Testis (tissue), 5 donors: ENCODE measurements at regions of chr9 and their contacts with region 1.

Region 1: DNA sequence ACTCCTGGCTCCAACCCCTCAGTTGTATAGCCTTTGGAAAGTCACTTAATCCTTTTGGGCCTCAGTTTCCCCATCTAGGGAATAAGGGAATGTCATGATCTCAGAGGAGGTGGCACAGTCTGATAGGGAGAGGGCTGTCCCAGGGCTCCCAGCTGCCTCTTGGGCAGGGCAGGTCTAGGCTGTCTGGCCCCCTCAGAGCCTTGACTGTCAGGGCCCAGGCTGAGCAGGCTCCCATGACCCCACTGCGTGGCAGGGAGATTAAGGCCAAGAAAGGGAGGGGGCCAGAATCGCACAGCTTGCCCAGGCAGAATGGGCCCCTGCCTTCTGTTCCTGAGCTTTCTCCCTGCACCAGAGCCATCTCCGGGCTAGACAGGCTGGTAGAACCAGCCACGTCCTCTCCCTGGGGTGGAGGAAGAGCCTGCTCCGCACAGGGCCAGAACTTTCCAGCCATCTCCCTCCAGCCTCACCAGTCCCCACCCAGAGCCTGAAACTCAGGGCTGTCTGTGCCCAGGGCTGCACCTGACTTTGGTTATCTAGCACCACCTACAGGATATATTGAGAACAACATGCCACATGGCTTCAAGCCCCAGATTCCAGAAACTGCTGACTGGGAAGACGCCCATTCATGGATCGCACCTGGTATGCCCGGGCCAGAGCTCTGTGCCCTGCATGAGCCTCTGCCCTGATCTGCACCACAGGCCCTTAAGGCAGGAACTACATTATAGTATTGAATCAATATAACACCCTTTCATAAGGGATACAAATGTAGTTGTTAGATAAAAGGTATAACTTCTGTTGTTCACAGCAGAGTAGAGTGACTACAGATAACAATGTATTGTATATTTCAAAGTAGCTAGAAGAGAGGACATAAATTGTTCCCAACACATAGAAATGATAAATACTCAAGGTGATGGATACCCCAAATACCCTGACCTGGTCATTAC is 32.0 kb downstream of the NAIF1 start:
- DNase-seq: peak; percentile 83
- H3K4me3 ChIP-seq: no peak overlapping the region
- H3K27ac ChIP-seq: no peak overlapping the region
- H3K4me1 ChIP-seq: no peaks in the 10 kb centered on the region
- H3K27me3 ChIP-seq: no peaks in the 10 kb centered on the region
- CTCF ChIP-seq: peak; percentile 91 to 96 (median 93)
- POLR2A ChIP-seq: no peak

Region 2: GRCh38 chr9:127949827-127950512 is 85.1 kb before region 1 on chr9:
- intact Hi-C with region 1: loop called (anchors 5 kb)
- DNase-seq: peak; percentile 84
- H3K4me3 ChIP-seq: no peak overlapping the region
- H3K27ac ChIP-seq: peak overlapping the region; percentile 56 to 77
- H3K4me1 ChIP-seq: peaks cover 68% of the 10 kb centered on the region
- H3K27me3 ChIP-seq: no peaks in the 10 kb centered on the region
- CTCF ChIP-seq: no peak
- POLR2A ChIP-seq: no peak

Region 3: GRCh38 chr9:128103589-128103962 is 68.5 kb after region 1 on chr9:
- intact Hi-C with region 1: no loop called
- DNase-seq: no peak
- H3K4me3 ChIP-seq: no peak overlapping the region
- H3K27ac ChIP-seq: peak overlapping the region; percentile 54 to 63
- H3K4me1 ChIP-seq: peaks cover 76% of the 10 kb centered on the region
- H3K27me3 ChIP-seq: no peaks in the 10 kb centered on the region
- CTCF ChIP-seq: no peak
- POLR2A ChIP-seq: no peak